ENCODE measurements at regions of chr4 and their contacts with region 1.

Region 1: GRCh38 chr4:108303488-108304177 is 134.9 kb upstream of the LEF1 start:
- DNase-seq: no peak
- ATAC-seq: no peak
- H3K4me3 ChIP-seq: no peak overlapping the region
- H3K4me3 Mint-ChIP-seq: no peak overlapping the region
- H3K27ac ChIP-seq: no peak overlapping the region
- H3K27ac Mint-ChIP-seq: peak overlapping the region in 2 of 9 donors; percentile 40 to 43
- H3K4me1 ChIP-seq: peaks cover 0 to 16% of the 10 kb centered on the region in 2 donors
- H3K4me1 Mint-ChIP-seq: peaks cover 12 to 56% (median 38%) of the 10 kb centered on the region in 7 donors
- H3K27me3 ChIP-seq: no peaks in the 10 kb centered on the region
- H3K27me3 Mint-ChIP-seq: peaks cover 0 to 3% (median 0%) of the 10 kb centered on the region in 5 donors

Region 2: GRCh38 chr4:108255203-108255747 is 48.4 kb before region 1 on chr4:
- CTCF ChIA-PET with region 1: no interaction called
- POLR2A ChIA-PET with region 1: no interaction called
- intact Hi-C with region 1: loop called in 1 of 2 experiments (anchors 5 kb)
- DNase-seq: no peak
- ATAC-seq: no peak
- H3K4me3 ChIP-seq: no peak overlapping the region
- H3K4me3 Mint-ChIP-seq: no peak overlapping the region
- H3K27ac ChIP-seq: no peak overlapping the region
- H3K27ac Mint-ChIP-seq: no peak overlapping the region
- H3K4me1 ChIP-seq: no peaks in the 10 kb centered on the region
- H3K4me1 Mint-ChIP-seq: peaks cover 0 to 25% (median 13%) of the 10 kb centered on the region in 7 donors
- H3K27me3 ChIP-seq: no peaks in the 10 kb centered on the region
- H3K27me3 Mint-ChIP-seq: no peaks in the 10 kb centered on the region

Region 3: GRCh38 chr4:108313546-108314339 is 10.1 kb after region 1 on chr4:
- CTCF ChIA-PET with region 1: interaction called, 3 read pairs
- POLR2A ChIA-PET with region 1: no interaction called
- intact Hi-C with region 1: loop called in 1 of 2 experiments (anchors 2 kb)
- DNase-seq: no peak
- ATAC-seq: no peak
- H3K4me3 ChIP-seq: no peak overlapping the region
- H3K4me3 Mint-ChIP-seq: peak overlapping the region in 6 of 10 donors; percentile 50 to 84 (median 76)
- H3K27ac ChIP-seq: no peak overlapping the region
- H3K27ac Mint-ChIP-seq: peak overlapping the region in 5 of 9 donors; percentile 14 to 89 (median 74)
- H3K4me1 ChIP-seq: peaks cover 0 to 33% of the 10 kb centered on the region in 2 donors
- H3K4me1 Mint-ChIP-seq: peaks cover 23 to 63% (median 57%) of the 10 kb centered on the region in 7 donors
- H3K27me3 ChIP-seq: no peaks in the 10 kb centered on the region
- H3K27me3 Mint-ChIP-seq: peaks cover 0 to 28% (median 0%) of the 10 kb centered on the region in 5 donors

Measured in naive thymus-derived CD4-positive, alpha-beta T cell (primary cell).